ENCODE measurements at regions of chr10 and their contacts with region 1.

Region 1: GRCh38 chr10:112137154-112137987 is 46.2 kb downstream of the GPAM start:
- DNase-seq: peak; percentile 88

Region 2: GRCh38 chr10:111756217-111757061 is 380.9 kb before region 1 on chr10:
- CTCF ChIA-PET with region 1: interaction called, 10 read pairs
- POLR2A ChIA-PET with region 1: no interaction called
- DNase-seq: peak; percentile 62

Region 3: DNA sequence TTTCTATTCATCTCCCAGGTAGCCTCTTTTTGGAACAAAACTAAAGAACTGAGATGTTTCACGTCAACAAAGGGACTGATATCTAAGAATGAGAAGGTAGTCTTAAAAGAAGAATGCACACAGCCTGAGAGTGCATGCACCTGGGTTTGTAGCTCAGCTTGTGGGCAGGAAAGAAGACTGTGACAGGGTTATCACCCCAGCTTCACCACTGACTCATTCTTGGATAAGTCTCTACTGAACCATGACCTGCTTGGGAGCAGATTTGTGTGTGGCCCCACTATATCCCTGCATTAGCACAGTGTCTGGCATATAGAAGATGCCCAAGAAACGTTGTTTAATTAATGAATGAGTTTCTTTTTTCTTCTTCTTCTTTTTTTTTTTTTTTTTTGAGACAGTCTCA is 141.3 kb before region 1 on chr10:
- CTCF ChIA-PET with region 1: no interaction called
- POLR2A ChIA-PET with region 1: no interaction called
- DNase-seq: no peak

Region 4: GRCh38 chr10:112115799-112116385 is 21.5 kb before region 1 on chr10:
- CTCF ChIA-PET with region 1: interaction called, 32 read pairs
- POLR2A ChIA-PET with region 1: no interaction called
- DNase-seq: peak; percentile 83

Region 5: DNA sequence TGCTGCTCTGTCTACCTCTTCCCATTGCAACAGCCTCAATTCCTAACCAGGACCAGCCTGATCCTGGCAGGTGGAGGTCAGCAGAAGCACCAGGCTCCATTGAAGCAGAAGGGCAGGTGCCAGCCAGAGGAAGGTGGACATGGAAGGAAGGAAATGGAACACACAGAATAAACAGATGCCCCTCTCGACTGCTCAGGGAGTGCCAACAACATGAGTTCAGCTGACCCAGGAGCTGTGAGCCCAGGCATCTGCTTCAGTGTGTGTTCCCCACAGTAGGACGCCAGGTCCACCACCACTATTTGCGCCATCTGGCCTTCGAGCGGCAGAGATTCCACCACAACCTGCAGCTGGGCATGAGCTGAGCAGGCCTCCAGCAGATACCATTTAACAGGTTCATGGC is 10.5 kb before region 1 on chr10:
- CTCF ChIA-PET with region 1: interaction called, 16 read pairs
- POLR2A ChIA-PET with region 1: no interaction called
- DNase-seq: no peak